ENCODE measurements at regions of chr14 and their contacts with region 1.

Region 1: GRCh38 chr14:91317381-91318308 is 73.1 kb upstream of the GPR68 start:
- DNase-seq: peak; percentile 90
- H3K4me3 Mint-ChIP-seq: peak overlapping the region; percentile 82
- H3K27ac Mint-ChIP-seq: peak overlapping the region; percentile 97
- H3K4me1 Mint-ChIP-seq: peaks cover 54% of the 10 kb centered on the region
- H3K27me3 Mint-ChIP-seq: no peaks in the 10 kb centered on the region

Region 2: GRCh38 chr14:91244501-91244901 is 73.1 kb before region 1 on chr14 and contains the start of gene GPR68:
- intact Hi-C with region 1: loop called (anchors 5 kb)
- DNase-seq: peak; percentile 84
- H3K4me3 Mint-ChIP-seq: peak within 1 kb of the TSS; percentile 84
- H3K27ac Mint-ChIP-seq: peak within 1 kb of the TSS; percentile 91
- H3K4me1 Mint-ChIP-seq: peaks cover 82% of the 10 kb centered on the region
- H3K27me3 Mint-ChIP-seq: no peaks in the 10 kb centered on the region
- total RNA-seq, gene GPR68: 4.6 and 4.9 TPM in 2 replicates

Region 3: DNA sequence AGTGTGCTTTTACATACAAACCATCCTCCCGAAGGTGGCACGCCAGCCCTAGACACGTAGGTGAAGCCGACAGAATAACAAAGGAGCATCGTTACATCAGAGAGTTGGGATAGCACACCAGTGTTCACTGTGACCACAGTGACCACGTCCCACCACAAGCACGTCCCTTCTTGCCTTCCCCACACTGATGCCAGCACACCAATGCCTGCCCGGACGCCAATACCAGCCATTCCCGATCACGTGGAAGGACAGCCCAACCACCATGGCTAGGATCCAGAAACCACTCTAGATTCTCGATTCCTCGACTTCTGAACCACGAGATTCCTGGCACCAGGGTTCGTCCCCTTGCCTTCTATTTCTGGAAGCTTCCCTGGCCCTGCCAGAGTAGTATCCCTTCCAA is 25.2 kb before region 1 on chr14:
- intact Hi-C with region 1: no loop called
- DNase-seq: no peak
- H3K4me3 Mint-ChIP-seq: no peak overlapping the region
- H3K27ac Mint-ChIP-seq: peak overlapping the region; percentile 56
- H3K4me1 Mint-ChIP-seq: peaks cover 6% of the 10 kb centered on the region
- H3K27me3 Mint-ChIP-seq: no peaks in the 10 kb centered on the region

Region 4: GRCh38 chr14:91303091-91303923 is 14.3 kb before region 1 on chr14:
- intact Hi-C with region 1: loop called (anchors 1 kb)
- DNase-seq: peak; percentile 86
- H3K4me3 Mint-ChIP-seq: peak overlapping the region; percentile 54
- H3K27ac Mint-ChIP-seq: peak overlapping the region; percentile 92
- H3K4me1 Mint-ChIP-seq: peaks cover 52% of the 10 kb centered on the region
- H3K27me3 Mint-ChIP-seq: no peaks in the 10 kb centered on the region

Region 5: DNA sequence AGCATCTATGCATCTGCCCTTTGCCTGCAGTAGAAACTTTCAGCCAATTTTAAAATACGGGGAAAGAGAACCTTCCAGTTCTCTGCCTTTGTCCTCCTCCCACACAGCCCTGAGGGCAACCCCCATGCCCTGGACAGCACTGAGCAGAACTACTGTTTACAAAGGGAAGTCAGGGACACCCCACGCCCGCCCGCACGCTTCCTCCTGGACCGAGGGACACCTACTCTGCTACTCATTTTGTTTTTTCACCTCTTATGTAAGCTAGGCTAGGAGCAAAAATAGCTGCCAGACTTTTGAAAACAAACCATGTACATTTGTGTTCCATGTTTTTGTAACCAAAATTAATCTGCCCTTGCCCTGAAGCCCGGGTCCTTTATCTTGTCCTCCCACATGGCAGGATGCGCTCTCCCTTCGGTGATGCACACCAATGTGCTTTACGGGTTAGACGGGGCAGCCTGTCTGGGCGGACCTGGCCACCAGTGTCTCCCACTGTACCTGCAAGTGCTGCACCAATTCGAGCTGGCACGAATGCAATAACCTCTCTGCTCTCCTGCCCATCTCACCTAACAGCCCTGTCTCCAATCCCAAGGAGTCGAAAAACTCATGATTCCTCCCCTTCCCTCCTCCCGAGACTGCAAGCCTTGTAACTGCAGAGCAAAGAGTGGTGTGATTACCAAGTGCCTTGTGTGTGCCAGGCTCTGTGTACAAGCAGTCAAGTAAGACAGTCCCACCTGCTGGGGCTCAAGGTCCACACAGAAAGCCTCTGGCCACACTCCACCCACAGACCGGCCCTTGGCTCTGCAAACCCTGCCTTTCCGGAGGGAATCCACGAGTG is 14.7 kb after region 1 on chr14:
- intact Hi-C with region 1: no loop called
- DNase-seq: no peak
- H3K4me3 Mint-ChIP-seq: peak overlapping the region; percentile 2
- H3K27ac Mint-ChIP-seq: peak overlapping the region; percentile 57
- H3K4me1 Mint-ChIP-seq: peaks cover 49% of the 10 kb centered on the region
- H3K27me3 Mint-ChIP-seq: no peaks in the 10 kb centered on the region